ENCODE measurements at regions of chr3 and their contacts with region 1.

Region 1: DNA sequence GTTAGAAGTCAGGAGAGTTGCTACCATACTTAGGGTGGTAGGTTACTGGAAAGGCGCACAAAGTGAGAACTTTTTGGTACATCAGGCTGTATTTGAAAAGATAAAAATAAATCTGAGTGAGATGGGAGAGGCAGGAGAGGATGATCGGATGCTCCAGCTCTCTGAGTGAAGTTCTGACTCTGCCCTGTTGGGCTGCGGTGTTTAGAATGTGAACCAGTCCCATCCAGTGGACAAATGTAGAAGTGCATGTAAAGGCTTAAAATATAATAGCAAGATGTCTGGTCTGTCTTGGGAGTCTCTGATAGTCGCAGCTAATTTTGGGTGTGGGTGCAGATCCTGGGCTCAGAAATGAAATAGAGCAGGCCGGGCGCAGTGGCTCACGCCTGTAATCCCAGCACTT is 30.4 kb downstream of the ACKR2 start:
- DNase-seq: peak; percentile 66
- H3K4me3 ChIP-seq: peak overlapping the region; percentile 2 to 49
- H3K27ac ChIP-seq: no peak overlapping the region
- H3K4me1 ChIP-seq: no peaks in the 10 kb centered on the region
- H3K27me3 ChIP-seq: no peaks in the 10 kb centered on the region
- CTCF ChIP-seq: peak; percentile 73
- EP300 ChIP-seq: no peak
- RAD21 ChIP-seq: peak; percentile 79

Region 2: GRCh38 chr3:42780892-42781700 is 58.5 kb before region 1 on chr3:
- CTCF ChIA-PET with region 1: interaction called, 51 read pairs
- POLR2A ChIA-PET with region 1: no interaction called
- DNase-seq: peak; percentile 70
- H3K4me3 ChIP-seq: no peak overlapping the region; a peak in 1 of 4 replicates
- H3K27ac ChIP-seq: no peak overlapping the region
- H3K4me1 ChIP-seq: no peaks in the 10 kb centered on the region
- H3K27me3 ChIP-seq: no peaks in the 10 kb centered on the region
- CTCF ChIP-seq: peak; percentile 79
- EP300 ChIP-seq: no peak
- RAD21 ChIP-seq: peak; percentile 79

Region 3: DNA sequence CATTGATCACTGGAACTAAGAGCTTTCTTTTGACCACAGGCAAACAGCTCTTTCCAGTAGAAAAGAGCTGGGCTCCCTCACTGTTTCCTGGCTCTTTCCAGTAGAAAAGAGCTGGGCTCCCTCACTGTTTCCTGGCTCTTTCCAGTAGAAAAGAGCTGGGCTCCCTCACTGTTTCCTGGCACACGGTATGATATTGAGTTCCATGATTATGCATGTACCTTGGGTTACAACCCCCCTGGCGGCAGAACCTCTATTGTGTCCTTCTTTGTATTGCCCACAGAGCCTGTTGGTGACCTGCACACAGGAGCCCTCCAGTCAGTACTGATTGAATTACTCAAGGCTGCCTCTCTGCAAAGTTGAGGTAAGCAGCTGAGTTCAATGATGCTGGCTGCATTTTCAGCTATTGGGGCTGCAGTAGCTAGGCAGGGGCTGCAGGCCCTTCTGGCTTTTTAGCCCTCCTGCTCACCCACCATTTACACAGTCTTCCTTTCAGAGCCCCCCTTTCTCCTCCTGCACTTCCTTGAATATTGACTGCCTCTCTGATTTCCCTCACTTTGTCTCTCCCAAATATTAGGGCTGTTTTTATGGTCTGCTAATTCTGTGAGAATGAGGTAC is 20.2 kb before region 1 on chr3:
- CTCF ChIA-PET with region 1: interaction called, 33 read pairs
- POLR2A ChIA-PET with region 1: no interaction called
- DNase-seq: peak; percentile 54
- H3K4me3 ChIP-seq: no peak overlapping the region
- H3K27ac ChIP-seq: peak overlapping the region; percentile 12 to 64; a peak in 2 of 4 replicates
- H3K4me1 ChIP-seq: peaks cover 0 to 11% of the 10 kb centered on the region in 2 experiments; a peak in 2 of 4 replicates
- H3K27me3 ChIP-seq: no peaks in the 10 kb centered on the region
- CTCF ChIP-seq: peak; percentile 28; the same call in 1 of the 2 replicates
- EP300 ChIP-seq: no peak
- RAD21 ChIP-seq: no peak

Region 4: DNA sequence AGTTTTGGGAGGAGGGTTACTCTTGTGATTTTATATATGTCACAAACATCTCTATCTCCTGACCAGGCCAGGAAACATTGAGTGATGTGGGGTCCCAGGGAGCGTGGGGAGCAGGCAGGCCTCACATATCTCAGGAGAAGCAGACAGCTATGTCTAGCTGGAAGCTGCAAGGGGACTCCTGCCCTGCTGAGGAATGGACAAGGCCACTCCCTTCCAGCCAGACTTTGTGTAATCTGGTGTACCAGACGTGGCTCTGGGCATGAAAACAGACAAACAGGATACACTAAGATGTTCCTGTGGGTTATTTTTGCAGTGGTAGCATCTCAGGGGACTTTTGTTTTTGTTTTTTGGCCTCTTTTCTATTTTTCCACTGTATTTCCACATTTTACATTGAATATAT is 12.8 kb after region 1 on chr3:
- CTCF ChIA-PET with region 1: interaction called, 21 read pairs
- POLR2A ChIA-PET with region 1: no interaction called
- DNase-seq: peak; percentile 23
- H3K4me3 ChIP-seq: no peak overlapping the region
- H3K27ac ChIP-seq: peak overlapping the region in 1 of 2 experiments; percentile 69; a peak in 2 of 4 replicates
- H3K4me1 ChIP-seq: peaks cover 0 to 15% of the 10 kb centered on the region in 2 experiments; a peak in 1 of 4 replicates
- H3K27me3 ChIP-seq: peaks cover 8% of the 10 kb centered on the region; the same call in 1 of the 2 replicates
- CTCF ChIP-seq: no peak
- EP300 ChIP-seq: no peak
- RAD21 ChIP-seq: no peak

Region 5: GRCh38 chr3:42871592-42872196 is 32.1 kb after region 1 on chr3:
- CTCF ChIA-PET with region 1: interaction called, 21 read pairs
- POLR2A ChIA-PET with region 1: no interaction called
- DNase-seq: peak; percentile 78
- H3K4me3 ChIP-seq: no peak overlapping the region
- H3K27ac ChIP-seq: peak overlapping the region in 1 of 2 experiments; percentile 92; a peak in 2 of 4 replicates
- H3K4me1 ChIP-seq: peaks cover 0 to 22% of the 10 kb centered on the region in 2 experiments; a peak in 1 of 4 replicates
- H3K27me3 ChIP-seq: peaks cover 19% of the 10 kb centered on the region; the same call in 1 of the 2 replicates
- CTCF ChIP-seq: no peak
- EP300 ChIP-seq: peak in 1 of 2 experiments; percentile 37; a peak in 2 of 4 replicates
- RAD21 ChIP-seq: no peak

Region 6: GRCh38 chr3:42880601-42881451 is 41.2 kb after region 1 on chr3:
- CTCF ChIA-PET with region 1: interaction called, 21 read pairs
- POLR2A ChIA-PET with region 1: no interaction called
- DNase-seq: peak; percentile 93
- H3K4me3 ChIP-seq: peak overlapping the region; percentile 55 to 57
- H3K27ac ChIP-seq: no peak overlapping the region
- H3K4me1 ChIP-seq: peaks cover 0 to 10% of the 10 kb centered on the region in 2 experiments; a peak in 1 of 4 replicates
- H3K27me3 ChIP-seq: no peaks in the 10 kb centered on the region
- CTCF ChIP-seq: peak; percentile 78
- EP300 ChIP-seq: no peak
- RAD21 ChIP-seq: peak; percentile 90

Measured in SK-N-SH (cell line).